Activated naive CD4-positive, alpha-beta T cell treated with anti-CD3 and anti-CD28 coated beads for 36 hours (primary cell): ENCODE measurements at regions of chr1 and their contacts with region 1.

Region 1: DNA sequence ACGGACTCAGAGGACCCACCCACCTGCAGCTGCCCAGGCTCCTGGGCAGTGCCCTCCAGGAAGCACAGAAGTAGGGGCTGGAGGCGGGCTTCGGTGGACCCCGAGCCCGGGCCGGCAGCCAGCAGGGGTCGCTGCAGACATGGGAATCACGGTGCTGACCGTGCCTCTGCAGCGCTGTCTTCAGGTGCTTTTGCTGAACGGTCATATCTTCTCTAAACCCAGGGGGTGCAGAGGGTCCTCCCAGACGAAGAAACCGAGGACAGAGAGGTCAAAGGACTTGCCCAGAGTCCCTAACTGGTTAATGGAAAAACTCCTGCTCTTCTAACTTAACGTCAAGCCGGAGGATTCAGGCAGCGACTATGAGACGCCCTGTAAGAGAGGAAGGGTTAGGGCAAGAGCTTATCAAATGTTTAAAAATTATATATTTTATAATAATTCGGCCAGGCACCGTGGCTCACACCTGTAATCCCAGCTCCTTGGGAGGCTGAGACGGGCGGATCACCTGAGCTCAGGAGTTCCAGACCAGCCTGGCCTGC is 21.5 kb upstream of the LEFTY2 start:
- DNase-seq: peak; percentile 76
- H3K4me3 Mint-ChIP-seq: no peak overlapping the region
- H3K27ac Mint-ChIP-seq: no peak overlapping the region
- H3K4me1 Mint-ChIP-seq: no peaks in the 10 kb centered on the region
- H3K27me3 Mint-ChIP-seq: no peaks in the 10 kb centered on the region

Region 2: DNA sequence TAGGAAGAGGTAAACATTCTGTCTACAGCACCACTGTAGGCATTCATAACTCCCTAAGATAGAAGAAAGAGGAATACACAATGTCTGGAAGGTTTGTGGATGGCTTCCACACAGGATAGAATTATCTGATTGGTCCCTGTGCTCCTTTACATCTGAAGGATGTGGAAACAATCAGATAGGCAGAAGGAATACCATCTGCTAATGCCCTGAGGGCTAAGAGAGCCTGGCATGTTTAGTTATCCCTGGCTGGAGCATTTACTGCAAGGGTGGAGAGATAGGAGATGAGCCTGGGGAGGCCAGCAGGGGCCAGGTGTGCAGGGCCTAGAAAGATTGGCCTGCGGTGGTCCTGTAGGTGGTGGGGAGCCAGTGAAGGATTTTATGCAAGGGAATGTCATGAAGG is 232.6 kb after region 1 on chr1:
- CTCF ChIA-PET with region 1: interaction called, 5 read pairs
- intact Hi-C with region 1: loop called (anchors 10 kb)
- DNase-seq: no peak
- H3K4me3 Mint-ChIP-seq: no peak overlapping the region
- H3K27ac Mint-ChIP-seq: no peak overlapping the region
- H3K4me1 Mint-ChIP-seq: no peaks in the 10 kb centered on the region
- H3K27me3 Mint-ChIP-seq: peaks cover 4% of the 10 kb centered on the region